ENCODE measurements at regions of chr9 and their contacts with region 1.

Region 1: DNA sequence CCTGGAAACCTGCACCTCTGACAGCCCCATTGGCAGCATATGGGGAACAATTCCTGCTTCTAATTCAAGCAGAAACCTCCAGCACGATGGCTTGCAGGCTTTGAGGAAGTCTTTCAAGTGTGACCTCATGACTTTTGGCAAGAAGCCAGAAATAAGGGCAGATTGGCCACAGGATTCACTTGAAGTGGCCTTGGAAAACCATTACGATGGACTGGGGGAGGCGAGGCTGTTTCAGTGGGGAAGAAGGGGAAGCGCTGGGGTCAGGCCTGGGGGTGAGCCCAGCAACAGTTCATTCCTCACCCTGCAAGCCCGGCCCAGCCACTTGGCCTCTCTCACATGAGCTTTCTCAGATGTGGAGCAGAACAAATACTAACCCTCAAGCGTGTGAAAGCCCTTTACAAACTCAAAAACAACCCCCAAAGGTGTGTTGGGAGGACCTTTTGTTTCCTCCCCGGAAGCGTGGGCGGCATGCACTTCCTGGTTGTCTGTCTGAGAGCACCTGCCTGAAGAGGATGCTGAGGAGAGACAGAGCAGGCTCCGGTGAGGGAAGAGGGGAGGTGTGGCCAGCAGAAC is 26.9 kb upstream of the EEIG1 start:
- DNase-seq: peak; percentile 82 to 98 (median 92)
- ATAC-seq: peak; percentile 88
- H3K4me3 ChIP-seq: peak overlapping the region in 1 of 2 experiments; percentile 46
- H3K4me3 Mint-ChIP-seq: peak overlapping the region; percentile 73
- H3K27ac ChIP-seq: peak overlapping the region; percentile 63 to 68
- H3K27ac Mint-ChIP-seq: peak overlapping the region; percentile 96
- H3K4me1 ChIP-seq: peaks cover 76% of the 10 kb centered on the region
- H3K4me1 Mint-ChIP-seq: peaks cover 75% of the 10 kb centered on the region
- H3K27me3 ChIP-seq: no peaks in the 10 kb centered on the region
- H3K27me3 Mint-ChIP-seq: no peaks in the 10 kb centered on the region
- CTCF ChIP-seq: no peak

Region 2: DNA sequence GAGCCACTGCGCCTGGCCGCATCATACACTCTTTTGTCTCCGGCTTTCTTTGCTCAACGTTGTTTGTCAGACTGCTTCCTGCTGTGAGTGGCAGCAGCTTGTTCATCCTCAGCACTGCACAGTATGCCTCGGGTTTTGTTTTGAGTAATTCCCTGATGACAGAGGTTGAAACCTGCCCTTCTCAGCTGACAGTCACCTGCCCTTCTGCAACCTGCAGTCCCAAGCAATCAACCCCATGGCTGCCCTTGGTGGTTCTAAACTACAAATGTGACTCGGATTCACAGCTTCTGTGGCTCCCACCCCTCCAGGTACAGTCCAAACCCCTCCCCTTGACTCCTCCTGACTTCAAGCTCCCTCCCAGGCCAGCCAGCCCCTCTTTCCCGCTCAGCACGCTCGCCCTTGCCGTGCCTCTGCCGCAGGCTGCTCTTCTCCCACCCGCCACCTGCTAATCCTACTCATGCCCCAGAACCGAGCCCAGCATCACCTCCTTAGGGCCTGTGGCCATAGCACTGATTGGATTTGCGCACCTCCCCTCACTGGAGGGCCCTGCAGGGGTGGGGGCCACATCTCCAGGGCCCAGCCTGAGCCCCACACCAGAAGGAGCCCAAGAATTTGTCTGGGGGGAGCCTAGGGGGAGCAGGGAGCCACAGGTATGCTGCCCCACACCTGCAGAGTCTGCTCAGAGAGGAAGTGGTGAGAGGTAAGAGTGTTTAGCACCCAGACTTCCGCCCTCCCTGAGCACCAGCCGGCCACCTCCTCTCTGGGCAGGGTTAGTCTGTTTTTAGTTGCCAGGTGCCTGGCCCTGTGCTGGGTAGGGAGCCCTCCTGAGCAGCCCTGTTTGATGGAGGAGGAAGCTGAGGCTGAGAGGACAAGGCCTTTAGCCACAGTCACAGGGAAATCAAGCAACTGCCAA is 37.0 kb before region 1 on chr9:
- CTCF ChIA-PET with region 1: no interaction called
- POLR2A ChIA-PET with region 1: interaction called, 11 read pairs
- intact Hi-C with region 1: loop called in 1 of 2 experiments (anchors 5 kb)
- DNase-seq: peak; percentile 38 to 86 (median 75)
- ATAC-seq: peak; percentile 60
- H3K4me3 ChIP-seq: peak overlapping the region; percentile 32 to 73
- H3K4me3 Mint-ChIP-seq: peak overlapping the region; percentile 88
- H3K27ac ChIP-seq: peak overlapping the region; percentile 67 to 76
- H3K27ac Mint-ChIP-seq: peak overlapping the region; percentile 99
- H3K4me1 ChIP-seq: peaks cover 96% of the 10 kb centered on the region
- H3K4me1 Mint-ChIP-seq: peaks cover 98% of the 10 kb centered on the region
- H3K27me3 ChIP-seq: no peaks in the 10 kb centered on the region
- H3K27me3 Mint-ChIP-seq: no peaks in the 10 kb centered on the region
- CTCF ChIP-seq: no peak

Region 3: DNA sequence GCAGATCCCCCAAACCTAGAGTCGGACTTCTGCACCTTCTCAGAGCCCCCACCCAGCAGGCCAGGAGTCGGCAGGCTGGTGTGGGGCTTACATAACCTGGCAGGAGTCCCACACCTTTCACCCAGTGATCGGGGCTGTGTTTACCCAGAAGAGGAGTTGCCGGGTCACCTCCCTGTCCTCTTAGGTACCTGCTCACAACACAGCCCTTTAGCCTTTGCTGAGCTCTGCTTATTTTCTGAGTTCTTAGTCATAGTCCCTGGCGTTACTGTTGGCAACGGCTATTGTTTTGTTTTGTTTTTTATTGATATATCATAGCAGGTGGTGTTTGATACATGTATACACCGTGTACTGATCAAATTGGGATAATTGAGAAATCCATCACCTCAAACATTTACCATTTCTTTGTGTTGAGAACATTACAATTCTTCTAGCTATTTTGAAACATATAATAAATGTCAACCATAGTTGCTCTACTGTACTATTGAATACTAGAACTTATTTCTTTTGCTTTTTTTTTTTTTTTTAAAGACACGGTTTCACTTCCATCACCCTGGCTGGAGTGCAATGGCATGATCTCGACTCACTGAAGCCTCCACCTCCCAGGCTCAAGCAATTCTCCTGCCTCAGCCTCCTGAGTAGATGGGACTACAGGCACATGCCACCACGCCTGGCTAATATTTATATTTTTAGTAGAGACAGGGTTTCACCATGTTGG is 16.5 kb before region 1 on chr9:
- CTCF ChIA-PET with region 1: interaction called, 4 read pairs
- POLR2A ChIA-PET with region 1: interaction called, 8 read pairs
- intact Hi-C with region 1: loop called in 1 of 2 experiments (anchors 2 kb)
- DNase-seq: peak in 1 of 9 experiments; percentile 17
- ATAC-seq: peak; percentile 36
- H3K4me3 ChIP-seq: no peak overlapping the region
- H3K4me3 Mint-ChIP-seq: no peak overlapping the region
- H3K27ac ChIP-seq: no peak overlapping the region
- H3K27ac Mint-ChIP-seq: no peak overlapping the region
- H3K4me1 ChIP-seq: peaks cover 33% of the 10 kb centered on the region
- H3K4me1 Mint-ChIP-seq: peaks cover 30% of the 10 kb centered on the region
- H3K27me3 ChIP-seq: no peaks in the 10 kb centered on the region
- H3K27me3 Mint-ChIP-seq: no peaks in the 10 kb centered on the region
- CTCF ChIP-seq: no peak

Region 4: DNA sequence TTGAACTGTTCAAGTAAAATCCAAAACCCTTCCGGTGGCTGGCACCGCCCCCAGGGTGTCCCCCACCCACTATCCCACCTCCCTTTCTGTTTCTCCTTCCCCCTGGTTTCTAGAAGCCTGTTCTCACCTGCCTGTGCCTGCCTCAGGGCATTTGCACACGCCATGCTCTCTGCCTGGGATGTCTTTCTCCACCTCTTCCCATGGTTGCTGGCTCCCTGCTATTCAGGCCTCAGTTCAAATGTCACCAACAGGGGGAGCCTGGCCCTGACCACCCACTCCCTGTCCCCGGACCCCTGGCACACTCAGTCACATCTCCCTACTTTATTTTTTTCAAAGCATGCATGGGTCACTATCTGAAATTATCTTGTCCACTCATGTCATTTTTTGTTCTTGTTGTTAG is 13.0 kb after region 1 on chr9:
- CTCF ChIA-PET with region 1: interaction called, 6 read pairs
- POLR2A ChIA-PET with region 1: interaction called, 73 read pairs
- intact Hi-C with region 1: no loop called
- DNase-seq: peak in 1 of 9 experiments; percentile 41
- ATAC-seq: no peak
- H3K4me3 ChIP-seq: no peak overlapping the region
- H3K4me3 Mint-ChIP-seq: no peak overlapping the region
- H3K27ac ChIP-seq: peak overlapping the region in 1 of 2 experiments; percentile 78
- H3K27ac Mint-ChIP-seq: peak overlapping the region; percentile 99
- H3K4me1 ChIP-seq: peaks cover 48% of the 10 kb centered on the region
- H3K4me1 Mint-ChIP-seq: peaks cover 67% of the 10 kb centered on the region
- H3K27me3 ChIP-seq: no peaks in the 10 kb centered on the region
- H3K27me3 Mint-ChIP-seq: no peaks in the 10 kb centered on the region
- CTCF ChIP-seq: no peak

Measured in CD8-positive, alpha-beta T cell (primary cell).